ENCODE measurements at regions of chr7 and their contacts with region 1.

Region 1: GRCh38 chr7:49371771-49372170 is 401.7 kb upstream of the VWC2 start:
- DNase-seq: no peak
- ATAC-seq: no peak
- H3K4me3 ChIP-seq: no peak overlapping the region
- H3K27ac ChIP-seq: no peak overlapping the region
- H3K4me1 ChIP-seq: no peaks in the 10 kb centered on the region
- H3K27me3 ChIP-seq: no peaks in the 10 kb centered on the region
- CTCF ChIP-seq: no peak
- POLR2A ChIP-seq: no peak
- RAD21 ChIP-seq: no peak

Region 2: DNA sequence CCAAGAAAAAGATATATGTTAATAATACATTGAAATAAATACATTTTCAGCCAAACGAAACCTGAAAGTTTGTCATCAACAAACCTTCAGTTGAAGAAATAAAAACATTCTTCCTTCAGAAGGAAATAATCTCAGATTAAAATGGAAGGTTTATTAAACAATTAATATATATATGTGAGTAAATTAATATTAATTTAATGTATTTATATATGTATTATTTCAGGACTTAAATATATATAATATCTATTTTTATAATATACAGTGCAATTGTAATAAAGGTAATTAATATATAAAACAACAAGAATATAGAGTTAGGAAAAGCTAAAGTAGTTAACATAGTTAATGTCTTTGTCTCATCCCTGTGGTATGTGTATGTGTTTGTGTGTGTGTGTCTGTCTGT is 549.6 kb before region 1 on chr7:
- CTCF ChIA-PET with region 1: no interaction called
- POLR2A ChIA-PET with region 1: no interaction called
- RAD21 ChIA-PET with region 1: no interaction called
- intact Hi-C with region 1: no loop called
- DNase-seq: no peak
- ATAC-seq: no peak
- H3K4me3 ChIP-seq: no peak overlapping the region
- H3K27ac ChIP-seq: no peak overlapping the region
- H3K4me1 ChIP-seq: no peaks in the 10 kb centered on the region
- H3K27me3 ChIP-seq: no peaks in the 10 kb centered on the region
- CTCF ChIP-seq: no peak
- POLR2A ChIP-seq: no peak
- RAD21 ChIP-seq: no peak

Region 3: GRCh38 chr7:49324707-49325106 is 47.1 kb before region 1 on chr7:
- CTCF ChIA-PET with region 1: no interaction called
- POLR2A ChIA-PET with region 1: no interaction called
- RAD21 ChIA-PET with region 1: no interaction called
- intact Hi-C with region 1: no loop called
- DNase-seq: no peak
- ATAC-seq: no peak
- H3K4me3 ChIP-seq: no peak overlapping the region
- H3K27ac ChIP-seq: no peak overlapping the region
- H3K4me1 ChIP-seq: no peaks in the 10 kb centered on the region
- H3K27me3 ChIP-seq: no peaks in the 10 kb centered on the region
- CTCF ChIP-seq: no peak
- POLR2A ChIP-seq: no peak
- RAD21 ChIP-seq: no peak

Region 4: GRCh38 chr7:49386792-49387191 is 15.0 kb after region 1 on chr7:
- CTCF ChIA-PET with region 1: no interaction called
- POLR2A ChIA-PET with region 1: no interaction called
- RAD21 ChIA-PET with region 1: no interaction called
- intact Hi-C with region 1: loop called (anchors 1 kb)
- DNase-seq: no peak
- ATAC-seq: no peak
- H3K4me3 ChIP-seq: no peak overlapping the region
- H3K27ac ChIP-seq: no peak overlapping the region
- H3K4me1 ChIP-seq: no peaks in the 10 kb centered on the region
- H3K27me3 ChIP-seq: no peaks in the 10 kb centered on the region
- CTCF ChIP-seq: no peak
- POLR2A ChIP-seq: no peak
- RAD21 ChIP-seq: no peak

Region 5: GRCh38 chr7:49718755-49719154 is 347.0 kb after region 1 on chr7:
- CTCF ChIA-PET with region 1: no interaction called
- POLR2A ChIA-PET with region 1: no interaction called
- RAD21 ChIA-PET with region 1: no interaction called
- intact Hi-C with region 1: no loop called
- DNase-seq: no peak
- ATAC-seq: no peak
- H3K4me3 ChIP-seq: no peak overlapping the region
- H3K27ac ChIP-seq: no peak overlapping the region
- H3K4me1 ChIP-seq: no peaks in the 10 kb centered on the region
- H3K27me3 ChIP-seq: no peaks in the 10 kb centered on the region
- CTCF ChIP-seq: no peak
- POLR2A ChIP-seq: no peak
- RAD21 ChIP-seq: no peak

Measured in HCT116 (cell line).